HepG2 (cell line): ENCODE measurements at regions of chr4 and their contacts with region 1.

Region 1: GRCh38 chr4:10018818-10019461 is 2.4 kb downstream of the SLC2A9 start:
- DNase-seq: no peak
- ATAC-seq: no peak
- H3K4me3 ChIP-seq: peak overlapping the region in 1 of 3 experiments; percentile 77; a peak in 1 of 6 replicates
- H3K27ac ChIP-seq: peak overlapping the region; percentile 89
- H3K4me1 ChIP-seq: peaks cover 96% of the 10 kb centered on the region
- H3K27me3 ChIP-seq: no peaks in the 10 kb centered on the region
- CTCF ChIP-seq: peak; percentile 28; the same call in 1 of the 2 replicates
- EP300 ChIP-seq: no peak
- POLR2A ChIP-seq: no peak
- RAD21 ChIP-seq: no peak

Region 2: GRCh38 chr4:9762823-9763475 is 256.0 kb before region 1 on chr4:
- CTCF ChIA-PET with region 1: interaction called, 11 read pairs
- POLR2A ChIA-PET with region 1: no interaction called
- in situ Hi-C with region 1: loop called (anchors 5 kb)
- intact Hi-C with region 1: no loop called
- DNase-seq: peak; percentile 71
- ATAC-seq: peak; percentile 78
- H3K4me3 ChIP-seq: no peak overlapping the region; a peak in 1 of 6 replicates
- H3K27ac ChIP-seq: no peak overlapping the region
- H3K4me1 ChIP-seq: peaks cover 5% of the 10 kb centered on the region; the same call in 1 of the 2 replicates
- H3K27me3 ChIP-seq: no peaks in the 10 kb centered on the region; a peak in 1 of 5 replicates
- CTCF ChIP-seq: peak; percentile 85
- EP300 ChIP-seq: no peak
- POLR2A ChIP-seq: no peak
- RAD21 ChIP-seq: peak; percentile 51

Region 3: GRCh38 chr4:10006231-10006600 is 12.7 kb before region 1 on chr4:
- CTCF ChIA-PET with region 1: no interaction called
- POLR2A ChIA-PET with region 1: interaction called, 21 read pairs
- in situ Hi-C with region 1: no loop called
- intact Hi-C with region 1: loop called (anchors 1 kb)
- DNase-seq: peak; percentile 86
- ATAC-seq: peak; percentile 88
- H3K4me3 ChIP-seq: peak overlapping the region in 2 of 3 experiments; percentile 45 to 52; a peak in 4 of 6 replicates
- H3K27ac ChIP-seq: peak overlapping the region; percentile 85
- H3K4me1 ChIP-seq: peaks cover 99% of the 10 kb centered on the region
- H3K27me3 ChIP-seq: no peaks in the 10 kb centered on the region
- CTCF ChIP-seq: no peak
- EP300 ChIP-seq: peak in 1 of 2 experiments; percentile 72; a peak in 2 of 4 replicates
- POLR2A ChIP-seq: no peak; a peak in 1 of 4 replicates
- RAD21 ChIP-seq: no peak

Region 4: DNA sequence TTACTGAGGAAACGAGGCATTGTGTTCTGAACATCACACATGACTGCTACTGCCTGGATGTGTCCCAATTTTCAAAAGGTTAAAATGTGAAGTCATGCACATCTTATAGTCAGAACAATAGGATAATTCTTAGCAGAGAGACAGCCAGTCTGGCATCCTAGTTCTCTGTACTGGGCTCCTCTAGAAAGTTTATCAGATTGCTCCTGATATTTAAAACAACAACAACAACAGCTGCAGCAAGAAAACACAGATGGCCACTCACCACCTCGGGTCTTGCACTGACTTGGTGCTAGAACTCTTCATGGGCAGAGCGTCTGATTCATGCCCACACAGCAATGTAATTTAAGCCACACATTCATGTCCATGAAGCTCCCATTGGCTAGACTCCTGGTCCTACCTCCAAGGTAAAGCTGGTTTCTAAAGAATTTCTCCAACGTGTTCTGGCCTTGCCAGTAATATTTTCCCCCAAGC is 35.7 kb after region 1 on chr4:
- CTCF ChIA-PET with region 1: no interaction called
- POLR2A ChIA-PET with region 1: interaction called, 3 read pairs
- in situ Hi-C with region 1: loop called (anchors 5 kb)
- intact Hi-C with region 1: no loop called
- DNase-seq: peak; percentile 48
- ATAC-seq: no peak
- H3K4me3 ChIP-seq: no peak overlapping the region
- H3K27ac ChIP-seq: no peak overlapping the region
- H3K4me1 ChIP-seq: peaks cover 55% of the 10 kb centered on the region
- H3K27me3 ChIP-seq: no peaks in the 10 kb centered on the region
- CTCF ChIP-seq: no peak
- EP300 ChIP-seq: no peak
- POLR2A ChIP-seq: no peak
- RAD21 ChIP-seq: no peak

Region 5: DNA sequence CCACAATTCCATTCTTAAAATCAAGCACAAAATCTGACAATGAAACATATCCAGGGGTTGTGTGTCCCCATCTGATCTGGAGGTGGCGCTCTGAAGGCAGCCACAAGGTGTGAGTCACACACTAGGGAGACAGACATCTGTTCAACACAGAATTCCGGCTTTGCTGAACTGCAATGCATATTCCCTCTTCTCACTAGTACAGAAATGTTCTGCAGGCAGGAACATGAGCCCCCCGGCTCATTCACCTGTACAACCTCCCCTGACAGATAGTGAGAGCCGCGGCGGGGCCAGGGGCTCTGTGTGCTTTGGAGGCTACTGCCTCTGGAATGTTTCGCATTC is 55.8 kb after region 1 on chr4:
- CTCF ChIA-PET with region 1: no interaction called
- POLR2A ChIA-PET with region 1: no interaction called
- in situ Hi-C with region 1: no loop called
- intact Hi-C with region 1: no loop called
- DNase-seq: no peak
- ATAC-seq: peak; percentile 74
- H3K4me3 ChIP-seq: no peak overlapping the region
- H3K27ac ChIP-seq: peak overlapping the region; percentile 13
- H3K4me1 ChIP-seq: peaks cover 12% of the 10 kb centered on the region
- H3K27me3 ChIP-seq: no peaks in the 10 kb centered on the region
- CTCF ChIP-seq: peak; percentile 61
- EP300 ChIP-seq: no peak
- POLR2A ChIP-seq: no peak
- RAD21 ChIP-seq: no peak

Region 6: DNA sequence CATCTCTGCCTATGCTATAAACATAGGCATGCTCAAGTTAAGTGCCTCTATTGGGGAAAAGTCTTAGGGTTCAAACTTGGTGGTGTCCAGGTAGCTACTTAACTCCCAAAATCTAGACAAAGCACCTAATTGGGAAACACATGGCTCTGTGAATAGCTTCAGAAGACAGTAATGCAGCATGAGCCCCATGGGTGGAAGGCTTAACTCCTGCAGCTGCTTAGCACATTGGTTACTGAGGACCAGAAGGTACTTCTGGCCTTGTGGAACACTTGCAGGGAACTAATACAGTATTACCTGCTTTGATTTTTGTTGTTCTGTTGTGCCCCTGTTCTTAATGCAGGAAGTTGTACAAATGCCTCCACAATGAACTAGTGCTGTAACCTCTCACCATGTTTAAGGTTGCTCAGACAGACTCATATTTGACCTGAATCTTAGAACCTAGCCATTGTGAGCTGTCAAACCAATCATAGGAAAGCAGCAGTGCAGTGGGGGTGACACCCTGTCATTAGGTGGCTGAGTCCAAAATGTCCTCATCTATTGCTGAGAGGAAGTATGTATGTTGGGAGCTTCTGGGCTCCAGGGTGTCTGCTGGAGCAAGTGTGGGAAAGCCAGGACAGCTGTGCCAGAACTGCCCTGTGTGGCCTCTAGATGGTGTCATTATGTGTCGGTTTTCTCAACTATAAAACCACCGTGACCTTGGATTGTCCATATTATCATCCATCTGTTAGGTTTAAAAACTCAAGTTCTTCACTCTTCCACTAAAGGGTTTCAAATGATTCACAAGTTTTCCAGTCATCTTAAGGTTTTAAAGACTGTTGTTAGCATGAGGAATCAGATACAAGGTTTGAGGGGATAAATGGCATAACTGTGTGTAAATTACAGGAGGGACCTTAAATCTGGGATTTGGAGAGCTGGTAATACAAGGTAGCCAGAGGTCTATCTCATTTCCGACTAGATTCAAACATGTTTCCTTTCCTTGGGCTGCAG is 167.6 kb after region 1 on chr4:
- CTCF ChIA-PET with region 1: no interaction called
- POLR2A ChIA-PET with region 1: no interaction called
- in situ Hi-C with region 1: no loop called
- intact Hi-C with region 1: no loop called
- DNase-seq: no peak
- ATAC-seq: peak; percentile 88
- H3K4me3 ChIP-seq: no peak overlapping the region
- H3K27ac ChIP-seq: no peak overlapping the region
- H3K4me1 ChIP-seq: no peaks in the 10 kb centered on the region
- H3K27me3 ChIP-seq: no peaks in the 10 kb centered on the region
- CTCF ChIP-seq: no peak
- EP300 ChIP-seq: no peak
- POLR2A ChIP-seq: no peak
- RAD21 ChIP-seq: no peak